Spleen (tissue), 13 donors: ENCODE measurements at regions of chr19 and their contacts with region 1.

Region 1: GRCh38 chr19:18328340-18329034 is 5.6 kb upstream of the LSM4 start:
- DNase-seq: peak; percentile 88
- H3K4me3 ChIP-seq: peak overlapping the region in 5 of 8 donors; percentile 14 to 57 (median 22)
- H3K27ac ChIP-seq: peak overlapping the region in 7 of 8 donors; percentile 28 to 74 (median 59)
- H3K4me1 ChIP-seq: peaks cover 13 to 30% (median 24%) of the 10 kb centered on the region in 6 donors
- H3K27me3 ChIP-seq: no peaks in the 10 kb centered on the region
- CTCF ChIP-seq: peak; percentile 91 to 99 (median 97)
- POLR2A ChIP-seq: no peak

Region 2: GRCh38 chr19:18205200-18205892 is 123.1 kb before region 1 on chr19:
- intact Hi-C with region 1: loop called (anchors 5 kb)
- DNase-seq: peak; percentile 94
- H3K4me3 ChIP-seq: peak overlapping the region; percentile 38 to 89 (median 70)
- H3K27ac ChIP-seq: peak overlapping the region; percentile 79 to 97 (median 95)
- H3K4me1 ChIP-seq: peaks cover 12 to 62% (median 32%) of the 10 kb centered on the region in 6 donors
- H3K27me3 ChIP-seq: peaks cover 0 to 30% (median 0%) of the 10 kb centered on the region in 7 donors
- CTCF ChIP-seq: no peak
- POLR2A ChIP-seq: peak in 1 of 3 donors; percentile 31